Activated B cell treated with CpG ODN at 0.5 μM for 24 hours (primary cell): ENCODE measurements at regions of chr14 and their contacts with region 1.

Region 1: GRCh38 chr14:22570132-22570949 is 18.7 kb downstream of the DAD1 start:
- DNase-seq: peak; percentile 53
- ATAC-seq: peak; percentile 88
- H3K4me3 Mint-ChIP-seq: peak overlapping the region; percentile 74
- H3K27ac Mint-ChIP-seq: peak overlapping the region; percentile 94
- H3K4me1 Mint-ChIP-seq: peaks cover 53% of the 10 kb centered on the region
- H3K27me3 Mint-ChIP-seq: no peaks in the 10 kb centered on the region
- CTCF ChIP-seq: peak; percentile 76

Region 2: GRCh38 chr14:22291406-22291805 is 278.9 kb before region 1 on chr14:
- CTCF ChIA-PET with region 1: no interaction called
- POLR2A ChIA-PET with region 1: no interaction called
- intact Hi-C with region 1: no loop called
- DNase-seq: no peak
- ATAC-seq: no peak
- H3K4me3 Mint-ChIP-seq: no peak overlapping the region
- H3K27ac Mint-ChIP-seq: no peak overlapping the region
- H3K4me1 Mint-ChIP-seq: no peaks in the 10 kb centered on the region
- H3K27me3 Mint-ChIP-seq: peaks cover 10% of the 10 kb centered on the region
- CTCF ChIP-seq: no peak

Region 3: GRCh38 chr14:22375321-22375930 is 194.9 kb before region 1 on chr14:
- CTCF ChIA-PET with region 1: interaction called, 13 read pairs
- POLR2A ChIA-PET with region 1: no interaction called
- intact Hi-C with region 1: no loop called
- DNase-seq: no peak
- ATAC-seq: peak; percentile 65
- H3K4me3 Mint-ChIP-seq: no peak overlapping the region
- H3K27ac Mint-ChIP-seq: no peak overlapping the region
- H3K4me1 Mint-ChIP-seq: peaks cover 5% of the 10 kb centered on the region
- H3K27me3 Mint-ChIP-seq: no peaks in the 10 kb centered on the region
- CTCF ChIP-seq: peak; percentile 46

Region 4: DNA sequence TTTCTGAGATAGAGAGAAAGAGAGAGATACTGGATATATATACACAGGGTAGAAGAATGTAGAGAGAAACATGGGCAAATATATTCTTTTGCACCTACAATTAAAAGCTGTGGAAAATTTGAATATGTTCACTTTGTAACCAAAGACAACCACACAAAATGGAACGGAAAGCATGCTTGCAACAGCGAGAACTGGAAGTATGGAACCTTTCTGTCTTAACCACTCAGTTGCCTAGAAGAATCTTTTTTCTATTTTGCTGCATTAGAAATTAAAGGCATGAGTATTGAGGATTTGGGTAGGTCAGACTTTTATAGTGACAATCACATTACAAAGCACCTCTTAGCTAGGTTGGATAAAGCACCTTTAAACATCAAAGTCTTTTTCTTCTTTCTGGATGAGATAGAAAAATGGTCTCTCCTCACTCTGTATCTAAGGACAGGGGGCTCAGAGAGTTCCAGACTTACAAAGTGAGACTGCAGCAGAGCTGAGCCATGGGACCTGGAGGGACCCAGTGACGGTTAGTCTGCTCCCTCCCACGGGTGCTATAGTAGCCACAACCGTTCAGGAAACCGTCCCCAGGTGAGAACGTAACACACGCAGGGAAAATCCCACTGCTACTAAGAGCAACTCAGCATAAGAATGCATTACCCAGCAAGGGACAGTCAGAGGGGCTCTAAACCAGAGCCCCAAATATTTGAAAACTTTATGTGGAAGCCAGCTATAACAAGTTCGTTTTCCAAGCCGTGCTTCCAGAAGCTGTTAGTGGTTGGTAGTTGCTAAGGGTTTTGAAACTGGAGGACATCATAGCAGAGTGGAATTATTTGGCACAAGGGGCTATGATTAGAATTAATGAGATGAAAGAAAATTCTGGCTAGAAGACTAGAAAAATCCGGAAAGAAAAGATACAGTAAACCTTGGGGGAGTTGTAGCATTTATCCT is 78.4 kb before region 1 on chr14:
- CTCF ChIA-PET with region 1: interaction called, 29 read pairs
- POLR2A ChIA-PET with region 1: interaction called, 5 read pairs
- intact Hi-C with region 1: loop called (anchors 1 kb)
- DNase-seq: no peak
- ATAC-seq: peak; percentile 37
- H3K4me3 Mint-ChIP-seq: peak overlapping the region; percentile 42
- H3K27ac Mint-ChIP-seq: peak overlapping the region; percentile 88
- H3K4me1 Mint-ChIP-seq: peaks cover 98% of the 10 kb centered on the region
- H3K27me3 Mint-ChIP-seq: no peaks in the 10 kb centered on the region
- CTCF ChIP-seq: no peak

Region 5: DNA sequence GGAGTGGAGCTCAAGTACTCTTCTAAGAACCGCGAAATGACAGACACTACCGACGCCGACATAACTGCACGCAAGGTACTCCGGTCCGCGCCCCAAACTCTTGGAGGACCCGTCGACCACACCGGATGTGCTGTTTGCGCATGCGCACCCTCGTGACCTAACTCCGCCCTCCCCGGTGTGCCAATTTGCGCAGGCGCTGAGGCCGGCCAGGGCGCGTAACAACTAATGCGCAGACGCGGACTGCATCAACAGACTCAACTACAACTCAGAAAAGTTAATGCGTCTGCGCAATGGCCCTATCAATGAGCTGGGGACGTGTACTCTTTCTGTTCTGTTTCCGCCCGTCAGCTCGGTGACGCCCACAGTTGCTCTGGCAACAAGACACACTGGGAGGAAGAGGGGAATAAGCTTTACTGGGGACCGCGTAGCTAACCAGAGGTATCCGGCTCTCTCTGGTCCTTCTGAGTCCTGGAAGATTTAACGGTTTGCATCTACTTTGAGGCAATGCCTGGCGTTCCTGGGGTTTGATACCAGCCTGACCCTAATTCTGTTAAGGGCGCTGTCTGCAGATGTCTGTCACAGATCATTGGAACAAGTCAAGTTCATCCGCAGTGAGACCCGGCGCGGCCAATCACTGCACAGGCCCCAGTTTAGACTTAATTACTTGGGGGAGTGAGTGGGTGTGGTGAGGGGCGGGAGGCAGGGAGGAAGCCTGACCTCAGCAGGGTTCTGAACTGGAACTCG is 18.9 kb after region 1 on chr14 and contains the start of gene DAD1:
- CTCF ChIA-PET with region 1: interaction called, 41 read pairs
- POLR2A ChIA-PET with region 1: interaction called, 16 read pairs
- intact Hi-C with region 1: loop called (anchors 1 kb)
- DNase-seq: peak; percentile 99
- ATAC-seq: peak; percentile 88
- H3K4me3 Mint-ChIP-seq: peak within 1 kb of the TSS; percentile 99
- H3K27ac Mint-ChIP-seq: peak within 1 kb of the TSS; percentile 100
- H3K4me1 Mint-ChIP-seq: peaks cover 57% of the 10 kb centered on the region
- H3K27me3 Mint-ChIP-seq: peaks cover 2% of the 10 kb centered on the region
- CTCF ChIP-seq: no peak
- total RNA-seq, gene DAD1: 123 and 139 TPM in 2 replicates

Region 6: GRCh38 chr14:22781586-22781991 is 211.2 kb after region 1 on chr14:
- CTCF ChIA-PET with region 1: interaction called, 18 read pairs
- POLR2A ChIA-PET with region 1: no interaction called
- intact Hi-C with region 1: loop called (anchors 1 kb)
- DNase-seq: no peak
- ATAC-seq: no peak
- H3K4me3 Mint-ChIP-seq: no peak overlapping the region
- H3K27ac Mint-ChIP-seq: peak overlapping the region; percentile 76
- H3K4me1 Mint-ChIP-seq: peaks cover 15% of the 10 kb centered on the region
- H3K27me3 Mint-ChIP-seq: no peaks in the 10 kb centered on the region
- CTCF ChIP-seq: no peak

Region 7: GRCh38 chr14:22900081-22900799 is 329.9 kb after region 1 on chr14:
- CTCF ChIA-PET with region 1: interaction called, 33 read pairs
- POLR2A ChIA-PET with region 1: interaction called, 6 read pairs
- intact Hi-C with region 1: loop called (anchors 1 kb)
- DNase-seq: no peak
- ATAC-seq: peak; percentile 91
- H3K4me3 Mint-ChIP-seq: no peak overlapping the region
- H3K27ac Mint-ChIP-seq: peak overlapping the region; percentile 43
- H3K4me1 Mint-ChIP-seq: peaks cover 5% of the 10 kb centered on the region
- H3K27me3 Mint-ChIP-seq: no peaks in the 10 kb centered on the region
- CTCF ChIP-seq: no peak